Dendritic cell treated with granulocyte-macrophage colony-stimulating factor and Interleukin-4, amounts not matched to agents 40 ng/mL and 50 ng/mL, for 4 days (primary cell): ENCODE measurements at regions of chr1 and their contacts with region 1.

Region 1: DNA sequence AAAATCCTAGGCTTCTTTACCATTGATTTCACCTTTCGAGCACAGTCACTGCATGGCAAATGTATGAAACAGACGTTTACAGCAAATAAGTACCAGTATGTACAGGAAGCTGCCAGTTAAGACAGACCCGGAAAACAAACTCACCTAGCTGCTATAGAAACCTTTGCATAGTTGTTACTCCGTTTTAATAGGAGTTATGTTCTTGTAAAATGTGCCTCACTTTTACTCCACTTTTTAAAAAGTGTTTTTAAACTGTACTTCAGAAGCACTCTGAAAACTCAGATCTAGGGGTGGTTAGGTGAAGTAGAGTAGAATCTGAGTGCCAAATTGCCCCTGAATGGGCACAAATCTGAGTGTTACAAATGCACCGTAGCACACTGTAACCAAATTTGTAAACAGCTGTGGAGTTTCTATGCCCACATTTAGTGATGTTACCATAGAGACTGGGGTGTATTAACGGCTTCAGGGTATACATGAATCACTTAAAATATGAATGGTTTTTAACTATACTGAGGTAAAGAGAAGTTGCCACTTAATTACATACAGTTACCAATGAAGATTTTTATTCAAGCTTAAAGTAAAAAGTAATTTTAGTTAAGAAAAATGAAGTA is 30.7 kb downstream of the CNIH4 start:
- H3K4me3 Mint-ChIP-seq: no peak overlapping the region
- H3K27ac Mint-ChIP-seq: no peak overlapping the region
- H3K4me1 Mint-ChIP-seq: peaks cover 16% of the 10 kb centered on the region
- H3K27me3 Mint-ChIP-seq: no peaks in the 10 kb centered on the region

Region 2: GRCh38 chr1:224420106-224420505 is 32.7 kb after region 1 on chr1:
- intact Hi-C with region 1: loop called (anchors 5 kb)
- H3K4me3 Mint-ChIP-seq: no peak overlapping the region
- H3K27ac Mint-ChIP-seq: no peak overlapping the region
- H3K4me1 Mint-ChIP-seq: peaks cover 5% of the 10 kb centered on the region
- H3K27me3 Mint-ChIP-seq: no peaks in the 10 kb centered on the region